Calu3 (cell line): ENCODE measurements at regions of chr18 and their contacts with region 1.

Region 1: DNA sequence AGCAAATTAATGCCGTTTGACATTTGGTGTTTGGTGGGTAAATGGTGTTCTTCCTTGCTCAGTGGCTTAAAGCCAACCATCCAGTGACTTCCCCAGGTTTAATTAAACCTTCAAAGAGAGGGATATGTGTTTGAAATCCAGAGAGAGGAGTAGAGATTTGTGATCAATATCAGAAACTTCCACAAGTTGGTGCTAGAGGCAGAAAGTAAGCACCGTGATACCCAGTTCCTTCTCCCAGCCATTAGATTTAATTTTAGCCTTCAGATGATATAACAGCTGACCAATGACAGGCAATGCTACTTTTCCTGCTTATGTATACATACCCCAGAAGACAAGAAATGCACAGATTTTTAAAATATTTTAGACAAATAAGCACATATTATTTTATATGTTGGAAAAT is 398.5 kb downstream of the CDH2 start:
- DNase-seq: no peak
- H3K4me3 Mint-ChIP-seq: no peak overlapping the region
- H3K27ac Mint-ChIP-seq: no peak overlapping the region
- H3K4me1 Mint-ChIP-seq: no peaks in the 10 kb centered on the region
- H3K27me3 Mint-ChIP-seq: no peaks in the 10 kb centered on the region
- CTCF ChIP-seq: no peak

Region 2: GRCh38 chr18:27735113-27735512 is 43.3 kb before region 1 on chr18:
- CTCF ChIA-PET with region 1: no interaction called
- intact Hi-C with region 1: no loop called
- DNase-seq: no peak
- H3K4me3 Mint-ChIP-seq: no peak overlapping the region
- H3K27ac Mint-ChIP-seq: no peak overlapping the region
- H3K4me1 Mint-ChIP-seq: no peaks in the 10 kb centered on the region
- H3K27me3 Mint-ChIP-seq: no peaks in the 10 kb centered on the region
- CTCF ChIP-seq: no peak

Region 3: DNA sequence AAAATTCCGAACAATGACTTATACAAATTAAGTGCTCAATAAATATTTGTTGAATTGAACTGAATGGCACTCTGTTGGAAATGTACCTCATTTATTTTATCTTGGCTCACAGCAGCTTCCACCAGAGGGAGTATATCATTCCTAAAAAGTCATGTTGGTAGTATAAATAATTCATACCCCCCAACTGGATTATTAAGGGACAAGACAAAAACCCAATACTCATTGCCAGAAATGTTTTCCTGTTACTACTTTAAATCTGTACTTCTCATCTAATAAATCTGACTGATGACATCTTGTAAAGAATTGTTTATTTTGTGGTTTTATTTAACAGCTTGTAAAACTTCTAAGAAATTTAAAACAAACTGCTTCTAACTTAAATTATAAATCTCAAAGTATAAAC is 234.6 kb after region 1 on chr18:
- CTCF ChIA-PET with region 1: no interaction called
- intact Hi-C with region 1: loop called (anchors 10 kb)
- DNase-seq: no peak
- H3K4me3 Mint-ChIP-seq: no peak overlapping the region
- H3K27ac Mint-ChIP-seq: no peak overlapping the region
- H3K4me1 Mint-ChIP-seq: peaks cover 10% of the 10 kb centered on the region
- H3K27me3 Mint-ChIP-seq: no peaks in the 10 kb centered on the region
- CTCF ChIP-seq: peak; percentile 23